Heart left ventricle (tissue), 16 donors: ENCODE measurements at regions of chr3 and their contacts with region 1.

Region 1: DNA sequence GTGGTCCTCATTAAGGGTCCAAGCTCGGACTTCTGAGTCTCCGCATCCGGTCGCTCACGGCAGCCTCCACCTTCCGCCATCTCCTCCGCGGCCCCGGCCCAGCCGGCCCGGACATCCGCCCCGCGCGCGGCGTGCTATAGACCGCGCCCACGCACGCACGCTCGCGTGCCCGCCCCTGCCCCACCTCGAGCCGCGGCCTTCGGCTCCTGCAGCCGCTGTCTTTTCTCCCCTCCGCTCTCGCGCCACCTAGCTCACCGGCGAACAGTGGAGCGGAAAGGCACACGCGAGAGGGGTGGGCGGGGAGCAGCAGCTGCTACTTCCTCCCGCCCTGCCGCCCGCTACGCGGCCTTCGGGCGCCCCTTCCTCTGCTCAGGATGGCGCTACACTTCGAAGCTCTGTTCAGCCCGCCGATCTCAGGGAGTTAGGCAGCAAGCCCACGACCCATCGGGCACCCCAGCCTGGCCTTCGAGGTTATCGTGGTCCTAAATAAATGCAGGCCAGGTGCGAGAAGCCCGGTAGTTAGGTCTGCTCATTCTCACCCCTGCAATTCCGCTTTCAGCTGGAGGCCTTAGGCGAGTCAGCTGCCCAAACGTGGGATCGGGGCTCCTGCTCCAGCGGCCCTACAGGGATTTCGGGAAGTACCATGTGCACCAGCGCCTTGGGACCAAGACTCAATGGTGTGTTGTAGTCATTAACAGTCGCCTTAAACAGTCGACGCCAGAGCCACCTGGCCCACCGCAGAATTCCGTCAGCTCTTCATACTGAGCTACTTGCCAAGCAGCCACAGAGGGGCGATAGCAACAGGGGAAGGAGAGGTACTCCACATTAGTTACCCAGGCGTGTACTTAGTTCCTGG is at the start of gene USP4:
- DNase-seq: peak; percentile 93 to 96 (median 94)
- ATAC-seq: peak; percentile 90 to 98 (median 96)
- H3K4me3 ChIP-seq: peak within 1 kb of the TSS; percentile 64 to 96 (median 82)
- H3K27ac ChIP-seq: peak within 1 kb of the TSS; percentile 83 to 98 (median 95)
- H3K4me1 ChIP-seq: peaks cover 0 to 80% (median 21%) of the 10 kb centered on the region in 12 donors
- H3K27me3 ChIP-seq: no peaks in the 10 kb centered on the region
- CTCF ChIP-seq: peak; percentile 20 to 78 (median 28)
- POLR2A ChIP-seq: peak in 1 of 2 donors; percentile 69
- total RNA-seq, gene USP4: 17.3 to 48.6 (median 37.2) TPM

Region 2: GRCh38 chr3:49165771-49166751 is 174.1 kb before region 1 on chr3 and contains the start of gene CCDC71:
- intact Hi-C with region 1: loop called in 6 of 10 experiments (anchors 2 to 5 kb)
- DNase-seq: peak; percentile 79 to 90 (median 83)
- ATAC-seq: peak; percentile 43 to 80 (median 75)
- H3K4me3 ChIP-seq: peak within 1 kb of the TSS; percentile 78 to 99 (median 89)
- H3K27ac ChIP-seq: peak within 1 kb of the TSS; percentile 82 to 96 (median 91)
- H3K4me1 ChIP-seq: peaks cover 0 to 32% (median 24%) of the 10 kb centered on the region in 12 donors
- H3K27me3 ChIP-seq: no peaks in the 10 kb centered on the region
- CTCF ChIP-seq: no peak
- POLR2A ChIP-seq: peak in 1 of 2 donors; percentile 57
- total RNA-seq, gene CCDC71: 9.7 to 24.0 (median 14.6) TPM

Region 3: DNA sequence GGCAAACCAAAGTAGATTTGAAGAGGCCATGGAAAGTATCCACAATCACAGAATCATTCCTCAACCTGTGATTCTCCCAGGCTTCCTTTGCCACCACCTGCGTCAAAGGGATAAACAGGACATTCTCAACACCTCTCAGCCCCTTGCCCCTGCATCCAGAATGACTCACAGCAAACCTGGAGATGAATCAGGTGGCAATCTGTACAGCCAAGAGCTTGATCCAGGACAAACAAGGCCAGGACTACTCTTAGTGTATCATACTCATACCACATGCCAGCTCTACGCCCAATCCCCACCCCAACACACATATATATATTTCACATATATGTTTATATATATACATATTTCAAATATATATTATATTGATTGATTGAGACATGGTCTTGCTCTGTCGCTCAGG is 39.6 kb before region 1 on chr3:
- intact Hi-C with region 1: loop called in 1 of 10 experiments (anchors 5 kb)
- DNase-seq: no peak
- ATAC-seq: no peak
- H3K4me3 ChIP-seq: no peak overlapping the region
- H3K27ac ChIP-seq: no peak overlapping the region
- H3K4me1 ChIP-seq: peaks cover 7 to 26% (median 18%) of the 10 kb centered on the region in 12 donors
- H3K27me3 ChIP-seq: no peaks in the 10 kb centered on the region
- CTCF ChIP-seq: no peak
- POLR2A ChIP-seq: no peak

Region 4: DNA sequence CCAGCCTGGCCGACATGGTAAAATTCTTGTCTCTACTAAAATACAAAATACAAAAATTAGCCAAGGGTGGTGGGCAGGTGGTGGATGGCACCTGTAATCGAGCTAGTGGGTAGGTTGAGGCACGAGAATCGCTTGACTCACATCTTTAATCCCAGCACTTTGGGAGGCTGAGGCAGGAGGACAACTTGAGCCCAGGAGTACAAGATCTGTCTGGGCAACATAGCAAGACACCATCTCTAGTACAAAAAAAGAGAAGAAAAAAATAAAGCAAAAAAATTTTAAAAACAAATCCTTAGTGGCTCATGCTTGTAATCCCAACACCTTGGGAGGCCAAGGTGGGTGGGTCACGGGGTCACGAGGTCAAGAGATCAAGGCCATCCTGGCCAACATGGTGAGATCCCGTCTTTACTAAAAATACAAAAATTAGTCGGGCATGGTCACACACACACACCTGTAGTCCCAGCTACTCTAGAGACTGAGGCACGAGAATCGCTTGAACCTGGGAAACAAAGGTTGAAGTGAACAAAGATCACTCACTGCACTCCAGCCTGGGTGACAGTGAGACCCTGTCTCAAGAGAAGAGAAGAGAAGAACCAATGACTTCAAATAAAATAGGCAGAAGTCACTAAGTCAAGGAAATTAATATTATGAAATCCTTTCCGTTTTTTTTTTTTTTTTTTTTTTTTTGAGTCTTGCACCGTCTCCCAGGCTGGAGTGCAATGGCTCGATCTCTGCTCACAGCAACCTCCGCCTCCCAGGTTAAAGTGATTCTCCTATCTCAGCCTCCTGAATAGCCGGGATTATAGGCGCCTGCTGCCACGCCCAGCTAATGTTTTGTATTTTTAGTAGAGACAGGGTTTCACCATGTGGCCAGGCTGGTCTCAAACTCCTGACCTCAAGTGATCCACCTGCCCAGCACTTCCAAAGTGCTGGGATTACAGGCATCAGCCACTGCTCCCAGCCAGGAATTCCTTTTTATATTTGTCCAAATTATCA is 66.7 kb after region 1 on chr3:
- intact Hi-C with region 1: loop called in 5 of 10 experiments (anchors 2 to 5 kb)
- DNase-seq: peak in 1 of 5 donors; percentile 18
- ATAC-seq: no peak
- H3K4me3 ChIP-seq: no peak overlapping the region
- H3K27ac ChIP-seq: peak overlapping the region in 8 of 12 donors; percentile 13 to 49 (median 27)
- H3K4me1 ChIP-seq: peaks cover 4 to 71% (median 52%) of the 10 kb centered on the region in 12 donors
- H3K27me3 ChIP-seq: no peaks in the 10 kb centered on the region
- CTCF ChIP-seq: no peak
- POLR2A ChIP-seq: no peak

Region 5: DNA sequence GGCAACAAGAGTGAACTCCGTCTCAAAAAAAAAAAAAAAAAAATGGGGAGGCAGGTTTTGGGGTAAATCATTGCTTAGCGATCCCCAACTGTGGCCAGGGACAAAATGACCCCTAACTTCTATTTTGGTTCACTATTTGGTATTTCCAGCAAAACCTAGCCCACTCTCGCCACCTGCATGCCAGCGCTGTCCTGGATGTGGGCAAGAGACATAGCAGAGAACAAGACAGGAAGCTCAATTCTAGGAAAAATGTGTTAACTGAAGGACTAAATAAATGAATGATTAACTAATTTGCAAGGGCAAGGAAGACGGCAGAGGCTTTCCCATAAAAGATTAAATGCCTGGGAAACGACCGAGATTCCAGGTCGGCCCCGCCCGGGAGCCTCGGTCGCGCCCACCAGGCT is 88.5 kb after region 1 on chr3:
- intact Hi-C with region 1: loop called in 2 of 10 experiments (anchors 5 kb)
- DNase-seq: no peak
- ATAC-seq: peak in 1 of 4 donors; percentile 5
- H3K4me3 ChIP-seq: peak overlapping the region; percentile 50 to 87 (median 74)
- H3K27ac ChIP-seq: peak overlapping the region; percentile 73 to 97 (median 93)
- H3K4me1 ChIP-seq: peaks cover 0 to 20% (median 7%) of the 10 kb centered on the region in 12 donors
- H3K27me3 ChIP-seq: no peaks in the 10 kb centered on the region
- CTCF ChIP-seq: no peak
- POLR2A ChIP-seq: no peak

Region 6: GRCh38 chr3:49454458-49454857 is 114.3 kb after region 1 on chr3:
- intact Hi-C with region 1: loop called (anchors 1 to 5 kb)
- DNase-seq: peak in 4 of 5 donors; percentile 18 to 55 (median 42)
- ATAC-seq: peak; percentile 53 to 81 (median 68)
- H3K4me3 ChIP-seq: no peak overlapping the region
- H3K27ac ChIP-seq: peak overlapping the region in 7 of 12 donors; percentile 6 to 74 (median 59)
- H3K4me1 ChIP-seq: peaks cover 0 to 28% (median 14%) of the 10 kb centered on the region in 12 donors
- H3K27me3 ChIP-seq: no peaks in the 10 kb centered on the region
- CTCF ChIP-seq: peak in 11 of 12 donors; percentile 8 to 54 (median 36)
- POLR2A ChIP-seq: no peak